MCF 10A (cell line): ENCODE measurements at regions of chr5 and their contacts with region 1.

Region 1: DNA sequence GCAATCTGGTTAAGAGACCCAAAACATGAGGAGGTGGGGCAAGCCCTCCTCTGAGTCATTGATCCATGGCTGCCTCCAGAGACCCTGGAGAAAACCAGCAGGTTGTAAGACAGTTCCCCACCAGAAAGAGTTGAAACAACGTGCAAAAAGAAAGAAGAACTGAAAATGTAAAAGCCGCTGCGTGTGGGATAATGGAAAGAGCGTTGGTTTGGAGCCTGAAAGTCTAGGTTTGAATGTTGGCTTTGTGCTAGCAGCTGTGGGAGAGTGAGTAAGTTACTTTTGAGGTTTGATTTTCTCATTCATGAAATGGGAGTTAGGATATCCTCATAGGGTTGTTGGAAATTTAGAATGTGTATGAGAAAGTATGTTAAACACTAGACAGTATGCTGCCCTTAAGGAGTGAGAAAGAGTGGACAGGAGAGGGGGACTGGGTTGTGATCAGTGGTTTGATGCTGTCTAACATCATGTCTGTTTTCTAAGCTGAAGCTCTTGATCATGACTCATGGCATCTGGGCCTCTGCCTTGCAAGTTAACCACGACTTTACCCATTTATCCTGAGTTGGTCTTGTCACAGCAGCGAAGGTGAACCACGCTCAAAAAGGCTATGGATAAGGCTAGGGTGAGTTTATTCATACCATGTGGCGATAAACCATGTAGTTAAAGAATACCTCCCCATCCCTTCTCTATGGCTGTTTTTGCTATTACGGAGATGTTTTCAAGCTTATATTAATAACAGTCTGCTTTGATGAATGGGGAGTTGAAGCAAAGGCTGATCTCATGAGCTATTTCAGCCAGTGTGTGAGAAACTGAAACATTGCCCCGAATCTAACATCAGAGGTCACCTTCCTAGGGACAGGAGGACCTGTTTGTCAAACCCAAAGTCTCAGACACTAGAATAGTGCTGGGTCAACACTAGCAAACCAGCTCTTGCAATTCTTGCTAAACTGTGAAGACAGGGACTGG is 41.3 kb downstream of the ZNF366 start:
- DNase-seq: no peak
- H3K4me3 Mint-ChIP-seq: no peak overlapping the region
- H3K27ac Mint-ChIP-seq: peak overlapping the region; percentile 3
- H3K4me1 Mint-ChIP-seq: peaks cover 46% of the 10 kb centered on the region
- H3K27me3 Mint-ChIP-seq: no peaks in the 10 kb centered on the region
- CTCF ChIP-seq: no peak

Region 2: GRCh38 chr5:71905834-71906711 is 559.8 kb before region 1 on chr5:
- CTCF ChIA-PET with region 1: no interaction called
- POLR2A ChIA-PET with region 1: no interaction called
- intact Hi-C with region 1: no loop called
- DNase-seq: no peak
- H3K4me3 Mint-ChIP-seq: no peak overlapping the region
- H3K27ac Mint-ChIP-seq: peak overlapping the region; percentile 90
- H3K4me1 Mint-ChIP-seq: peaks cover 23% of the 10 kb centered on the region
- H3K27me3 Mint-ChIP-seq: no peaks in the 10 kb centered on the region
- CTCF ChIP-seq: no peak

Region 3: DNA sequence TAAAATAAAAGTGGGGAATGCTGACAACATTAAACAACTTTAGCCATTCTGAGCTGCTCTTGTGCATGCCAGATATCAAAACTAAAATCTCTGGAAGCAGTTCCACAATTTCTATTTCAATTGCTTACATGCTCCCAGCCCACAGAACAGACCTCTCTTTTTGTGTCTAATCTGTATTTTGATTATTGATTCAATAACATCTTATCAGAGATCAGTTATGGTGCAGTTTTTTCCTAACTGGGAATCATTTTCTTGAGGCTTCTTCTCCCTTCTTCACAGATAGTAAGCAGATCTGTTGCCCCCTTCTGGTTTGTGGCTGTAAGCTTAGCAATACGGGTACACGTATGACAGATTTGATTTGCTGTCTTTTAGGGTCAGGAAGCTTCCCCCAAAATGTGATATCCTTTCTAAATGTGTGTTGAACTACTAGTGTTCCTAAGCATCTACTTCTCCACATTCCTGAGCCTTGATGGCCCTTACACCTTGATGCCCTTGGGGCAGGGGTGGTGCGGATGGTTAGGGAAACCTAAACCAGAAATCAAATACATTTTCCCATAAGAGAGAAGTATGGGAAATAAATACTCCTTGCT is 185.2 kb before region 1 on chr5:
- CTCF ChIA-PET with region 1: no interaction called
- POLR2A ChIA-PET with region 1: no interaction called
- intact Hi-C with region 1: no loop called
- DNase-seq: peak; percentile 47
- H3K4me3 Mint-ChIP-seq: no peak overlapping the region
- H3K27ac Mint-ChIP-seq: peak overlapping the region; percentile 91
- H3K4me1 Mint-ChIP-seq: peaks cover 43% of the 10 kb centered on the region
- H3K27me3 Mint-ChIP-seq: no peaks in the 10 kb centered on the region
- CTCF ChIP-seq: peak; percentile 21

Region 4: DNA sequence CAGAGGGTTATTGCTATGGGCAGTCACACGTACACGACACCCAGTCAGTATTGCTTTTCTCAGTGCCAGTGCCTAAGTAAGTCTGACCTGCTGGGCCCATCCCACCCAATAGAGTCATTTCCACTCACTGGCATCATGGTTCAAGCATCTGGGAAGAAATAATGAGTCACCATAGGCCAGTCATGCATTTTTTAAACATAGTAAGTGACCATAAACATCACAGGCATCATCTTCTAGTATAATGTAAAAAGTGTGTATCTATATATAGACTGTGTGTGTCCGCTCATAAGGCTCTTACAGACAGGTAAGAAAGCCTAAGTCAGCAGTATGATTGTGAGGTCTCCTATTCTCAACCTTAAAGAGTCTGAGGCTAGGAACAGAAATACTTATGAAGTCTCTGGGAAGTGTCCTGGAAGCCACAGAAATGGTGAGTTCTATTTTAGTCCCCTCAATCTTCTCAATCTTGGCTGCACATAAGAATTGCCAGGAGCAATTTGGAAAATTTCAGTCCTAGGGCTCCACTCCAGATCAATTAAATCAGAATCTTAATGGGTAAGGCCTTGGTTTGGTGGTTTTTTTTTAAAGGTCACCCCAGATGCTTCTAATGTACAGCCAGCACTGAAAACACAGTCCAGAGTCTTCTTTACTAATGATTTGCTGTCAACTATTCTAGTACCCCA is 23.9 kb before region 1 on chr5:
- CTCF ChIA-PET with region 1: interaction called, 3 read pairs
- POLR2A ChIA-PET with region 1: interaction called, 17 read pairs
- intact Hi-C with region 1: no loop called
- DNase-seq: peak; percentile 84
- H3K4me3 Mint-ChIP-seq: no peak overlapping the region
- H3K27ac Mint-ChIP-seq: peak overlapping the region; percentile 76
- H3K4me1 Mint-ChIP-seq: peaks cover 28% of the 10 kb centered on the region
- H3K27me3 Mint-ChIP-seq: no peaks in the 10 kb centered on the region
- CTCF ChIP-seq: no peak

Region 5: DNA sequence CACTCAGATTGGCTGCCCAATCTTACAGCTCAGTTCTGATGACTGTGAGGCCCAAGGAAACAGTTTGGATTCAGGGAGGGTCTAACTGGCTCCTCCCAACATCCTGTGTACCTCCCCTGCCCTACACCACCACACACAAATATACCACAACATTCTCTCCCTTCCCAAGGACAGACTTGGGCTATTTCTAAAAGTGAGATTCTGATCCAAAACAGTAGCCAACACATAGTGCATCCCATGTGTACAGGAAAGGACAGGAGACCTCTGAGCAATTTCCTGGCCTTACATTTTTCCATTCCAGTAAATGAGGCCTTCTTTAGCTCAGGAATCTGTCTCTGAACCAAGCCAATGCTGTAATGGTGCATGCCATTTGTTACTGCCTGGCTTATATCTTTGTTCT is 20.5 kb after region 1 on chr5:
- CTCF ChIA-PET with region 1: no interaction called
- POLR2A ChIA-PET with region 1: interaction called, 28 read pairs
- intact Hi-C with region 1: no loop called
- DNase-seq: no peak
- H3K4me3 Mint-ChIP-seq: no peak overlapping the region
- H3K27ac Mint-ChIP-seq: peak overlapping the region; percentile 96
- H3K4me1 Mint-ChIP-seq: peaks cover 27% of the 10 kb centered on the region
- H3K27me3 Mint-ChIP-seq: no peaks in the 10 kb centered on the region
- CTCF ChIP-seq: no peak

Region 6: DNA sequence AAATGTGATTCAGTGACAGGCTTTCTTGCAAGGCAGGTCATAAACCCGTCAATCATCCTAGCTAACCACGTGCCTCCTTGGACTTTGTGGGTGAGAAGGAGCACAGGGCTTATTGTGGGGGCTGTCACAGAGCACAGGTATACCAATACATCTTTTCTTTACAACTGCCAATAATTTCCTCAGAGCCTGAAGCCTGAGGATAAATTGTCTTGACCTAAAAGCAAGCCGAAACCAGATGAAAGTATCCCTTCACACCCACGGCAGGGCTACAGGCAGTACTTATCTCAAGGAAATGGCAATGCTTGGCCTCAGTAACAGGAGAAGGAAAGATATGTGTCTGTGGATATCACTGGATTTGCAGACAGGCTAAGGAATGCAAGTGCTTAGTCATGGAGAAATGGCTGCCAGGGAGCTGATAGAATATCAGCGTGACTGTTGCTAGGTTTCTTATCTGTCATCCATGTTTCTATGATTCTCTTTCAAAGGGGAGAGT is 131.6 kb after region 1 on chr5:
- CTCF ChIA-PET with region 1: no interaction called
- POLR2A ChIA-PET with region 1: no interaction called
- intact Hi-C with region 1: no loop called
- DNase-seq: peak; percentile 49
- H3K4me3 Mint-ChIP-seq: no peak overlapping the region
- H3K27ac Mint-ChIP-seq: no peak overlapping the region
- H3K4me1 Mint-ChIP-seq: peaks cover 19% of the 10 kb centered on the region
- H3K27me3 Mint-ChIP-seq: no peaks in the 10 kb centered on the region
- CTCF ChIP-seq: no peak

Region 7: DNA sequence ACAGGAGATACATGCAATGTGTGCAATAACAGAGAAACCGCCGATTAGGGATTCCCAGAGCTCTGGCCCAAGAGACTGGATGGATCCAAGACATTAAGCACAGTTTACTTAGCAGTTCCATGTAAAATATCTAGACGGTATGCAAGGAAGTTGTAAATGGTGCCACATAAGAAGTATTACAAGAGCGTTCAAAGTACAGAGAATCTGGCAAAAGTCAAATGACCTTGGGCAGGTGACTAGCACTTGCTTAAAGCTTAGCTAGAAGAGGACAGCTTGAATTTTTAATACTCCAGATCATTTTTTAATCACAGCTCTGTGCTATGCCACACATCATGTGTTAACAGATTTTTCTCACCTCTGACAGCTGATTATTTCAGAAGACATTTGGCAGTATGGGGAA is 278.3 kb after region 1 on chr5:
- CTCF ChIA-PET with region 1: no interaction called
- POLR2A ChIA-PET with region 1: no interaction called
- intact Hi-C with region 1: no loop called
- DNase-seq: no peak
- H3K4me3 Mint-ChIP-seq: no peak overlapping the region
- H3K27ac Mint-ChIP-seq: no peak overlapping the region
- H3K4me1 Mint-ChIP-seq: no peaks in the 10 kb centered on the region
- H3K27me3 Mint-ChIP-seq: no peaks in the 10 kb centered on the region
- CTCF ChIP-seq: no peak